ENCODE measurements at regions of chr12 and their contacts with region 1.

Region 1: GRCh38 chr12:62799126-62799736 is 135.7 kb downstream of the PPM1H start:
- DNase-seq: no peak
- ATAC-seq: peak; percentile 93
- H3K4me3 Mint-ChIP-seq: no peak overlapping the region
- H3K27ac Mint-ChIP-seq: no peak overlapping the region
- H3K4me1 Mint-ChIP-seq: peaks cover 3% of the 10 kb centered on the region
- H3K27me3 Mint-ChIP-seq: peaks cover 2% of the 10 kb centered on the region
- CTCF ChIP-seq: peak; percentile 75

Region 2: GRCh38 chr12:62813031-62813829 is 14.0 kb after region 1 on chr12:
- CTCF ChIA-PET with region 1: interaction called, 58 read pairs
- POLR2A ChIA-PET with region 1: no interaction called
- intact Hi-C with region 1: no loop called
- DNase-seq: no peak
- ATAC-seq: peak; percentile 42
- H3K4me3 Mint-ChIP-seq: peak overlapping the region; percentile 66
- H3K27ac Mint-ChIP-seq: no peak overlapping the region
- H3K4me1 Mint-ChIP-seq: peaks cover 6% of the 10 kb centered on the region
- H3K27me3 Mint-ChIP-seq: peaks cover 3% of the 10 kb centered on the region
- CTCF ChIP-seq: no peak

Measured in activated B cell treated with CpG ODN at 0.5 μM for 24 hours (primary cell).